Left cardiac atrium (tissue), 4 donors: ENCODE measurements at regions of chr14 and their contacts with region 1.

Region 1: GRCh38 chr14:34227834-34228649 is 234.0 kb downstream of the SPTSSA start:
- DNase-seq: peak; percentile 66
- ATAC-seq: peak; percentile 94 to 96

Region 2: GRCh38 chr14:33839193-33840076 is 388.6 kb before region 1 on chr14:
- intact Hi-C with region 1: loop called (anchors 2 to 5 kb)
- DNase-seq: peak; percentile 55
- ATAC-seq: peak; percentile 66 to 73

Region 3: DNA sequence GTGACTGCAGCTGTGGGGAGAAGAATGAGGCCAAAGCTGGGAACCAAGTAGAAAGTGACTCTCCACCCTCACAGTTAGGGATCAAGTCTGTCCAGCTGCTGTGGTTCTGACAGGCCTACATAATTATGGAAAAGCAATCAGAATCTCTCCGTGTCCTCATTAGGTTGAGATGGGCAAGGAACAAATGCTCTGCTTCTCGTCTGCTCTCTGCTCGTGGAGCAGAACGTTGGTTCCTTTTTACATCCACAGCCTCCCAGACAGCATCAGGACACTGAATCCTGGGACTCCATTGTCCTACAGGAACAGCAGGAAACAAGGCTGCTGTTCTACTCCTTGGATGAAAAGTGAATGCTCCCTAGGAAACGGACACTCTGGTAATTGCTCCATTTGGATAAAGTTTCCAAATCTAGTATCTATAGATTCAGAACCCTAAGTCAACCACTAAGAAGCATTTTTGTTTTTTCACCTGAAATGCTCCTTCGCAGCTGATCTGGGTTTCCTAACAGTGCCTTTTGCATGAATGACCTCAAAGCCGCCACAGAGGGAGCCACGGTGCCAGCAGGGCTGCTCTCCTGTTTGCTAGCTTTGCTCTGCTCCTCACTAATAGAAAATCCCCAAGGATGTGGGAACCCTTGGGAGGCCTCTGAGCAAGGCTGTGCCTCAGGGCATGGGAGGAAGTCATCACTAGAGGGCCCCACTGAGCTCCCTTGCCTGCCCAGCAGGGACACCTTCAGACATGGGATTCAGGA is 379.2 kb before region 1 on chr14:
- intact Hi-C with region 1: loop called (anchors 2 to 5 kb)
- DNase-seq: peak; percentile 65
- ATAC-seq: peak; percentile 90 to 94

Region 4: DNA sequence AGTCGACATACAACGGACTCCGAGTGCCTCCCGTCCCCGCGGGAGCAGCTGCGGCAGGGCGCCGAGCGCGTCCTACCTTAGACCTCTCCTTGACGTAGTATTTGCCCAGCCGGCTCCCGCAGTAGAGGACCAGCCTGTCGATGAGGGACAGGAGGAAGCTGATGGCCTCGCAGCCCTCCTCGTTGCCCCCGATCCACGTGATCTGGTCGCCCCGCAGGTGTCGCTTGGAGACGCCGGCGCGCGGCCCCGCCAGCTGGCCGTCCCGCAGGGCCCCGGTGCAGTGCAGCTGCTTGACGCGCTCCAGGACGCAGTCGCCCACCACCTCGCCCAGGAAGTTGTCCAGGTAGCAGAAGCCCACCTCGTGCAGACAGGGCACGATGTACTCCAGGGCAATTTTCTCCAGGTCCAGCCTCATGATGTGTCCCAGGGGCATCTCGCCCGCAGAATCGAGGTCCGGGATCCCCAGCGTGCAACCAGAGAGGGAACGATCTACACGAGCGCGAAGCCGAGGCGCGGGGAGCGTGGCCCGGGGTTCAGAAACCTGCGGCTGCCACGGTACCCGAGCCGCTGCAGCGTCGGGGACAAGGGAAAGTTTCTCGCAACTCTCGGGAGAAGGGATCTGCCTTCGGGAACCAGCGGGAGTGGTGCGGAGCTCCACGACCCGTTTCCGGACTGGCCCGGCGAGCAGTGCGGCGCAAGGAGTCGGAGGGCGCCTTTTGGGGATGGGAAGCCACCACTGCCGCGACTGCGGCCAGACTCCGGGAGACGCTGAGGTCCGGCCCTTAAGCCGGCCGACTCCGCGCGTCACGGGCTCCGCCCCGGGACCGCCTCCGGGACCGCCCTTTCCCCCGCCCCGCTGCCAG is 277.5 kb before region 1 on chr14 and contains the start of gene EGLN3:
- intact Hi-C with region 1: loop called in 1 of 2 experiments (anchors 5 kb)
- DNase-seq: peak; percentile 91
- ATAC-seq: peak; percentile 99 to 100
- total RNA-seq, gene EGLN3: 73.1 to 116 TPM

Region 5: DNA sequence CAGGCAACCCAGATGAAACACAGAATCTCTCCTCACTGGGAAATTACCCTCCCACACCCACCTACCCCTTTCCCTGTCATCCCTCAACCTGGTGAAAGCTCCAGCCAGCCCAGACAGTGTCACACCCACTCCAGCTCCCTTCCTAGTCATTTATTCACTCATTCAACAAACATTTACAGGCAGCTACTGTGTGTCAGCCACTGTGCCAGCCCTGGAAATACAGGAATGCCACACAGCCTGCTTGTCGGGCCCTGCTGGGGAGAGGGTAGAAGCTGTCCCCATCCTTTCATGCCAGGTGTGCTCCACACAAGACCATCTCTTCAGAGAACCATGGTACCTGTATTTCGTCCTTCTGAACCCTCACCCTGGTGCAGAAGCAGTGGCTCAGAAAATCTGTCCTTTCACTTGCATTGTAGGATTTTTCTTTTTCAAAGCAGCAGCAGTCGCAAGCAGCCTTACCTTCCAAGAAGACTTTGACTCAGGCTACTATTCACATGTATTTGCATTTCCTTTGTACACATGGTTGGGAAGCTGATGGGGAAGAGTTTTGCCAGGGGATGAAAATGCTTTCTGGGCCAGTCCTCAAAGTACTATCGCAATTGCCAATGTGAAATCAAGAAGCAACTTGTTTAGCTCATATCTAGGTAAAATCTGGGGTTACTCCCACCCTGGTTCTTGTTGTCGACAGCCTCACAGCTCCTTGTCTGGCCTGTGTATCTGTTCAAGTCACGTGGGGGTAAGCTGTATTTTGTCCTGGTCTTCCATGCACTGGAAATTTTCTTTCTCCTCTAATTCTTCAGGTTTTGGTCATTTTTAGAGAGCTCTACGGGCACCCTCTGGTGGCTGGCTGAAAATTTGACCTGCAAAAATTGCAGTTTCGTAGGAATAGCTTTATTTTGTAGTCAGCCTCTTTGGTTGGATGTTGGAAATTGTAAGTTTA is 129.7 kb before region 1 on chr14:
- intact Hi-C with region 1: loop called in 1 of 2 experiments (anchors 10 kb)
- DNase-seq: no peak
- ATAC-seq: peak; percentile 45 to 60

Region 6: GRCh38 chr14:34136996-34137745 is 90.9 kb before region 1 on chr14:
- intact Hi-C with region 1: loop called in 1 of 2 experiments (anchors 10 kb)
- DNase-seq: no peak
- ATAC-seq: no peak

Region 7: GRCh38 chr14:34300882-34301734 is 73.1 kb after region 1 on chr14:
- intact Hi-C with region 1: loop called in 1 of 2 experiments (anchors 2 kb)
- DNase-seq: no peak
- ATAC-seq: peak in 1 of 2 donors; percentile 37